ENCODE measurements at regions of chr19 and their contacts with region 1.

Region 1: DNA sequence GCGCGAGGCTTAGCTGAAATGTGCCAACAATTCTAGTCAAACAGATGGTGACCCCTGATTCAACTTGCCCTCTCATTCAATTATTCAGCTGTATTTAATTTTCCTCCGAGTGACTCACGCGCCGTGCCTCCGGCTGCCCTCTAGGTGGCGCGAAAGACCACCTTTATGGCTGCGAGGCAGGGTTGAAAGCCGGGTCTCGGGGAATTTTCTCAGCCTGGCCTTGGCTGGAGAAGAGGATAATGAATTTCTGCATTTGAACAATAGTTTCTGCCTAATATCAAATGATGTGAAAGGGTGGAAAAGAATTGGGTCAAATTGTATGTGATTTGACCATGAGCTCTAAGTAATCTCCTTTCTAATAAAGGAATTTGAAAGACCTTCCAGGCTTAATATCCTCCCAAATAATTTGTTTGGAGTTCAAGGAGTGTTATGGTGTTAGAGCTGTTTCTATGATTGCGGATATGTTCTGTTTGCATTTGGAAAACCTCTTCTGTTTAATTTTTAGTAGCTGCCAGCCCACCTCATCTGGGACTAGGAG is 310.9 kb downstream of the ZNF536 start:
- DNase-seq: peak; percentile 48
- H3K4me3 Mint-ChIP-seq: no peak overlapping the region
- H3K27ac Mint-ChIP-seq: no peak overlapping the region
- H3K4me1 Mint-ChIP-seq: no peaks in the 10 kb centered on the region
- H3K27me3 Mint-ChIP-seq: peaks cover 10% of the 10 kb centered on the region

Region 2: GRCh38 chr19:30651066-30651465 is 32.0 kb before region 1 on chr19:
- CTCF ChIA-PET with region 1: no interaction called
- POLR2A ChIA-PET with region 1: no interaction called
- DNase-seq: no peak
- H3K4me3 Mint-ChIP-seq: no peak overlapping the region
- H3K27ac Mint-ChIP-seq: no peak overlapping the region
- H3K4me1 Mint-ChIP-seq: no peaks in the 10 kb centered on the region
- H3K27me3 Mint-ChIP-seq: peaks cover 4% of the 10 kb centered on the region

Region 3: DNA sequence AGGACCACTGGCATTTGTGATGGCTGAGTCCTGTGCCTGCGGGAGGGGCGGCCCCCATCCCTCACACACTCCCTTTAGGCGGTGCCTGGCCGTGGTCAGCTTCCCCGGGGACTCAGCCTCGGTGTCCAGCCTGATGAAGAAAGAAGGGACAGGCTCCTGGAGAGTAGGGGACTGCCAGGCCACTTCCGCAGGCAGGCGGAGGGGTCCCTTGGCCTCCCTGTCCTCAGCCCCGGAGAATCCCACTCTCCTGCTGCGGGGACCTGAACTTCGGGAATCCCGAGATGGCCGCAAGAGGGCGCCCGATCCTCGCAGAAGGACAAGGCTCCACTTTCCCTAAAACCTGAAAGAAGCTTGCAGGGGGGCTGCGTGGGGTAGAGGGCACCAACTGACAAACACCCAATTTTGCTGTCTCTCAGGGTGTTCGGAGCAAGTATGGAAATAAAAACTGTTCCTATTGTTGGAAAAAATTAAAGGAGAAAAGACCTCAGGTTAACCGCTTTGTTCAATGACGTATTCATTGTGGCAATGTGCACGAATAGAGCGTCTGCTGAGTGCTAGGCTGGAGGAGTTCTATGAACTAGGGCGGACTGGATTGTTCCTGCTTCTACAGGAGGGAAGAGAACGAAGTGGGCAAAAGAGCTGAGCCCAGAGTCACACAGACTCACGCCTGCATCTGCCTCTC is 13.6 kb before region 1 on chr19:
- CTCF ChIA-PET with region 1: interaction called, 18 read pairs
- POLR2A ChIA-PET with region 1: no interaction called
- DNase-seq: peak; percentile 46
- H3K4me3 Mint-ChIP-seq: no peak overlapping the region
- H3K27ac Mint-ChIP-seq: no peak overlapping the region
- H3K4me1 Mint-ChIP-seq: no peaks in the 10 kb centered on the region
- H3K27me3 Mint-ChIP-seq: no peaks in the 10 kb centered on the region

Region 4: DNA sequence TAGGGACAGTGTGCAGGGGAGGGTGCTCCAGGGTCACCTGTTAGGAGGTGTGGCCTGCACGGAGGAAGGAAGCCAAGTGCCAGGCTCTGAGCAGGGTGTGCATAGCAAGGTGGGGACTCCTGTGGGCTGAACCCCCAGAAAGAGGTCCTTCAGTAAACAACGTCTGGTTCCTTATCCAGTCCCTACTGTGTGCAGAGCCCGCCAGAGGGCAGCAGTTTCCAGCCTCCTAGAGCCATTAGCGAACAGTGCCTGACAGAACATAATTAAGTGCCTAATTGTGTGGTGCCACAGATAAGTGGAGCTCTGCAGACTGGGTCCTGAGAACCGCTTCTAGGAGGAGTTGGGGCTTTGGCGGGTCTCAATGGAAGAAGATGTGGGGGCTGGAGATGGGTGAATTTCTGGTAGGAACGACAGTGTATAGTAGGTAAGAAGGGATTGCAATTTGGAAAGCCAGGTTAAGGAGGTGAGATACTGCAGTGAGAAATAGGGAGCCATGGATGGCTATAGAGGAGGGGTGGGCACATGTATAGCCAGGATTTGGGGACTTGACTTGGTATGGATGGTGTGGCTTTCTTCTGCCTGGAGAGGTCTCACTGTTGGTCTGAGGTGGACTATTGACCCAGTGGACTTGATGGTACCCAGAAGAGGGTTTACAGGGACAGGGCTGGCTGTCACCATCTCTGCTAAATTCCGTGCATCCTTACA is 12.3 kb after region 1 on chr19:
- CTCF ChIA-PET with region 1: interaction called, 20 read pairs
- POLR2A ChIA-PET with region 1: interaction called, 3 read pairs
- DNase-seq: no peak
- H3K4me3 Mint-ChIP-seq: no peak overlapping the region
- H3K27ac Mint-ChIP-seq: no peak overlapping the region
- H3K4me1 Mint-ChIP-seq: peaks cover 9% of the 10 kb centered on the region
- H3K27me3 Mint-ChIP-seq: peaks cover 27% of the 10 kb centered on the region

Region 5: GRCh38 chr19:30842926-30843325 is 159.9 kb after region 1 on chr19:
- CTCF ChIA-PET with region 1: no interaction called
- POLR2A ChIA-PET with region 1: no interaction called
- DNase-seq: no peak
- H3K4me3 Mint-ChIP-seq: no peak overlapping the region
- H3K27ac Mint-ChIP-seq: no peak overlapping the region
- H3K4me1 Mint-ChIP-seq: no peaks in the 10 kb centered on the region
- H3K27me3 Mint-ChIP-seq: no peaks in the 10 kb centered on the region

Measured in activated CD4-positive, alpha-beta memory T cell treated with anti-CD3 and anti-CD28 coated beads, Interleukin-2, amount 10 ng/mL, durations not matched to agents 7 days and 5 days (primary cell).